Naive thymus-derived CD8-positive, alpha-beta T cell (primary cell): ENCODE measurements at regions of chr1 and their contacts with region 1.

Region 1: GRCh38 chr1:39204441-39205081 is at the start of gene MACF1:
- DNase-seq: no peak
- ATAC-seq: peak; percentile 29 to 33
- H3K4me3 Mint-ChIP-seq: peak within 1 kb of the TSS; percentile 82 to 97 (median 92)
- H3K27ac Mint-ChIP-seq: peak within 1 kb of the TSS; percentile 63 to 99 (median 92)
- H3K4me1 Mint-ChIP-seq: peaks cover 41 to 67% (median 61%) of the 10 kb centered on the region in 4 donors
- H3K27me3 Mint-ChIP-seq: no peaks in the 10 kb centered on the region
- polyA plus RNA-seq, gene MACF1: 13.4 to 60.8 (median 14.7) TPM

Region 2: GRCh38 chr1:38898653-38899230 is 305.8 kb before region 1 on chr1:
- POLR2A ChIA-PET with region 1: no interaction called
- DNase-seq: no peak
- ATAC-seq: no peak
- H3K4me3 Mint-ChIP-seq: no peak overlapping the region
- H3K27ac Mint-ChIP-seq: peak overlapping the region in 1 of 10 donors; percentile 28
- H3K4me1 Mint-ChIP-seq: no peaks in the 10 kb centered on the region
- H3K27me3 Mint-ChIP-seq: no peaks in the 10 kb centered on the region

Region 3: GRCh38 chr1:39063775-39064174 is 140.8 kb before region 1 on chr1:
- POLR2A ChIA-PET with region 1: no interaction called
- DNase-seq: no peak
- ATAC-seq: no peak
- H3K4me3 Mint-ChIP-seq: no peak overlapping the region
- H3K27ac Mint-ChIP-seq: no peak overlapping the region
- H3K4me1 Mint-ChIP-seq: no peaks in the 10 kb centered on the region
- H3K27me3 Mint-ChIP-seq: no peaks in the 10 kb centered on the region

Region 4: DNA sequence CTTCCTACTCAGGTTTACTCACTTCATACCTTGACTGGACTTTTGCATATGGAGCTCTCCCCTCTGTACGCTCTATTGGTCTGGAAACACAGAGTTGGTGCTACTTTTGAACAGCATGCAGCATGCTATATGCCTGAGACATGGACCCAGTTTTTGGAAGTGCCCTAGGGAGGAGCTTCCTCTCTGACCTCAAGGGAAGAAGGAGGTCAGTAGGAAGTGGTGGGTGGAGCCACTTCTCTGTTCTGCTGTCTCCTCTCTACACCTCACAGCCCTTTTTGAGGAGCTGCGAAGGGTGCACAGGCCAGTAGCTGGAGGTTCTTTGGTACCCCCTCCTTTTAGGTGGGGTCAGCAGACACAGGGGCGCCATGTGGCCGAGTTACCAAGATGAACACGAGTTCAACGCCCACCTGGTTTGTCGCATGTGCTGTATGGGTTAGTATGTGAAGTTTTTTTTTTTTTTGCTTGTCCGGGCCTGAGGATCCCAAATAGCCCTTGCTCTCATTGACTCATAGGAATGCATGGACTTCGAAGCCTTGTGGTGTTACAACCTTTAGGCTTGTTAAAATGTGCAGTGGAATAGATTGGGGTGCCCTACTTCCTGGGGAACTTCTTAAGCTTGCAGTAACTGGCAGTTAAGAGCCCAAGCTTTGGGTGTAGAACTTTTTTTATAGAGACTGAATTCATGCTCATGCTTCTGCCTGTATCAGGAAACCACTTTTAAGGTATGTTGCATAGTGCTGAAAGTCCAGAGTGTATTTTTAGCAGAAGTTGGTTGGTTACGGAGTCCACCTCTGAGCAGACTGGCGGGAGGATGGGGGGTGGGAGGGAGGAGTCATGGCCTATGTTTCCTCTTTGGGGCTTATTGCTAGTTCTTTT is 10.7 kb after region 1 on chr1:
- POLR2A ChIA-PET with region 1: interaction called, 32 read pairs
- DNase-seq: peak in 3 of 10 donors; percentile 18 to 47 (median 43)
- ATAC-seq: peak; percentile 79 to 81
- H3K4me3 Mint-ChIP-seq: peak overlapping the region; percentile 85 to 98 (median 94)
- H3K27ac Mint-ChIP-seq: peak overlapping the region; percentile 88 to 98 (median 93)
- H3K4me1 Mint-ChIP-seq: peaks cover 26 to 67% (median 58%) of the 10 kb centered on the region in 4 donors
- H3K27me3 Mint-ChIP-seq: no peaks in the 10 kb centered on the region